BJ (cell line): ENCODE measurements at regions of chr7 and their contacts with region 1.

Region 1: GRCh38 chr7:42931834-42932651 is at the starts of genes MRPL32 and PSMA2:
- DNase-seq: peak; percentile 92
- H3K4me3 ChIP-seq: peak within 1 kb of the TSS; percentile 89
- H3K27me3 ChIP-seq: no peaks in the 10 kb centered on the region
- CTCF ChIP-seq: no peak
- polyA plus RNA-seq, gene MRPL32: 35.6 and 44.5 TPM in 2 replicates
- polyA plus RNA-seq, gene PSMA2: 50.8 and 101 TPM in 2 replicates

Region 2: GRCh38 chr7:42914421-42915045 is 17.5 kb before region 1 on chr7:
- CTCF ChIA-PET with region 1: interaction called, 13 read pairs
- POLR2A ChIA-PET with region 1: no interaction called
- DNase-seq: peak; percentile 37
- H3K4me3 ChIP-seq: no peak overlapping the region
- H3K27me3 ChIP-seq: no peaks in the 10 kb centered on the region
- CTCF ChIP-seq: no peak

Region 3: DNA sequence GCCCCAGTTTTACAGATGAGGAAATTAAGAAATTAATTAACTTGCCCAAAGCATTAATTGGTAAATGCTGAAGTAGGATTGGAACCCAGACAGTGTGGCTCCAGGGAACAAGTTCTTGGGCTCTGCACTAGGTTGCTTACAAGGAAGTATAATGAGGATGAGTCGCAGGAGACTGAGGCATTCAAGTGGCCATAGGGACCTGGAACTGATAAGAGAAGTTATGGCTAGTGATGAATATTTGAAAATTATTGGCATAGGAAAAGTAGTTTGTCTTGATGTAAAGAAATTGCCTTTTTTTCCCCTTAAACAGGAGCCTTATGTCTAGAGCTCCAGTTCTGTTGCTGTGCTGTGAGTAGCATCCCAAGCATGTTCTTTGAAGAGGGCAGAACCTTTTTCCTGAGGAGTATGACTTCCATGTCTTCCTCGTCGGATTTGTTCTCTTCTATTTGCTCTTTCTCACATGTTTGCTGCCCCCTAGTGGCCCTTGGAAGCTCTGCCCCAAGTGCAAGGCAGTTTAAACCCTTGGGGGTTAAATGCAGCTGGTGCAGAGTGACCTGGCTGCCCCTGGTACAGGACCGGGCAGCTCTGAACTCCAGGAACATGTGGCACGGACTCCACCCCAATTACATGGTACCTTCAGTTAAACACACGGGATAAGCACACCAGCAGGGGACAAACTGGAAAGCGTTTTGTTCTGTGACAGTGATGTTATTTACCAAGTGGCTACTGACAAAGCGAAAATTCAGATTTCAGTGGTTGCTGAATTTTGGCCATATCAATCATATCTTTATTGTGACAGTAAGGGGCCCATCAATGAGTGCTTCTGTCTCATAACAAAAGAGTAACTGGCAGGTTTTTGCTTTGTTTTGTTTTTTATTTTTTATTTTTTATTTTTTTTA is 329.2 kb after region 1 on chr7:
- CTCF ChIA-PET with region 1: interaction called, 20 read pairs
- POLR2A ChIA-PET with region 1: no interaction called
- DNase-seq: peak; percentile 37
- H3K4me3 ChIP-seq: no peak overlapping the region
- H3K27me3 ChIP-seq: no peaks in the 10 kb centered on the region
- CTCF ChIP-seq: peak; percentile 94

Region 4: GRCh38 chr7:43302211-43302711 is 370.2 kb after region 1 on chr7:
- CTCF ChIA-PET with region 1: no interaction called
- POLR2A ChIA-PET with region 1: no interaction called
- DNase-seq: no peak
- H3K4me3 ChIP-seq: no peak overlapping the region
- H3K27me3 ChIP-seq: no peaks in the 10 kb centered on the region
- CTCF ChIP-seq: no peak